ENCODE measurements at regions of chr11 and their contacts with region 1.

Region 1: DNA sequence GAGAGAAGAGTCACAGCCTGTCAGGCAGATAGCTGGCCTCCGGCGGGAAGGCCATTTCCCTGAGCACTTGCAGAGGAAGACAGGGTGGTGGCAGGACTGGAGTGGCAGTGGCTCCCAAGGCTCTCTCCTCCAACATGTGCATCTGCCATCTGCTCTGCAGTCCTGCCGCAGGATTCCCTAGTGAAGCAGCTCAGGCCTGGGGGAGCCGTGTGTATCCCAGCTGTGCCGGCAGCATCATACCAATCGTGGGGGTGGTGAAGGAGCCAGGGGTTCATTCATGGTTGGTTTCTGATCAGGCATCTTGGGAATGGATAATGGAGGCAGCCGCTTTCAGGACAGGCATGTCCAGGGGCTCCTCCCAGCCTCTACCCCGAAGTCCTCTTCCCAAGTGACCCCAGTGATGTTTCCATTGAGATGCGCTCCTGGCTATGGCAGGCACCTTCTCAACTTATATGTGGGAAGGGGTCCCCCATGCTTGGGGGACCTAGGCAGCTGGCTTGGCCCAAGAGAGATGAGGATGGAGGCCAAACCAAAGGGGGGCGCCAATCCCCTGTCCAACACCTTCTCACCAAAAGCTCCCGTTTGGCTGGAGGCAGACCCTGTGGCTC is 6.1 kb downstream of the TAGLN start:
- DNase-seq: no peak
- H3K4me3 Mint-ChIP-seq: no peak overlapping the region
- H3K27ac Mint-ChIP-seq: peak overlapping the region; percentile 44
- H3K4me1 Mint-ChIP-seq: no peaks in the 10 kb centered on the region
- H3K27me3 Mint-ChIP-seq: no peaks in the 10 kb centered on the region
- CTCF ChIP-seq: no peak

Region 2: GRCh38 chr11:117045196-117045595 is 160.1 kb before region 1 on chr11:
- CTCF ChIA-PET with region 1: no interaction called
- POLR2A ChIA-PET with region 1: no interaction called
- intact Hi-C with region 1: no loop called
- DNase-seq: peak; percentile 47
- H3K4me3 Mint-ChIP-seq: no peak overlapping the region
- H3K27ac Mint-ChIP-seq: no peak overlapping the region
- H3K4me1 Mint-ChIP-seq: peaks cover 26% of the 10 kb centered on the region
- H3K27me3 Mint-ChIP-seq: no peaks in the 10 kb centered on the region
- CTCF ChIP-seq: no peak

Region 3: GRCh38 chr11:117134431-117134830 is 70.9 kb before region 1 on chr11:
- CTCF ChIA-PET with region 1: no interaction called
- POLR2A ChIA-PET with region 1: no interaction called
- intact Hi-C with region 1: loop called (anchors 5 kb)
- DNase-seq: no peak
- H3K4me3 Mint-ChIP-seq: no peak overlapping the region
- H3K27ac Mint-ChIP-seq: no peak overlapping the region
- H3K4me1 Mint-ChIP-seq: peaks cover 4% of the 10 kb centered on the region
- H3K27me3 Mint-ChIP-seq: no peaks in the 10 kb centered on the region
- CTCF ChIP-seq: no peak